Calu3 (cell line): ENCODE measurements at regions of chr1 and their contacts with region 1.

Region 1: GRCh38 chr1:106396023-106396422 is 660.5 kb upstream of the PRMT6 start:
- DNase-seq: no peak
- H3K4me3 Mint-ChIP-seq: no peak overlapping the region
- H3K27ac Mint-ChIP-seq: no peak overlapping the region
- H3K4me1 Mint-ChIP-seq: no peaks in the 10 kb centered on the region
- H3K27me3 Mint-ChIP-seq: no peaks in the 10 kb centered on the region
- CTCF ChIP-seq: no peak

Region 2: GRCh38 chr1:106620521-106620954 is 224.5 kb after region 1 on chr1:
- CTCF ChIA-PET with region 1: no interaction called
- intact Hi-C with region 1: loop called (anchors 1 kb)
- DNase-seq: peak; percentile 44
- H3K4me3 Mint-ChIP-seq: no peak overlapping the region
- H3K27ac Mint-ChIP-seq: no peak overlapping the region
- H3K4me1 Mint-ChIP-seq: peaks cover 9% of the 10 kb centered on the region
- H3K27me3 Mint-ChIP-seq: no peaks in the 10 kb centered on the region
- CTCF ChIP-seq: no peak